Testis (tissue), 5 donors: ENCODE measurements at regions of chr10 and their contacts with region 1.

Region 1: GRCh38 chr10:80500572-80501380 is 36.9 kb upstream of the SH2D4B start:
- DNase-seq: peak; percentile 85
- H3K4me3 ChIP-seq: no peak overlapping the region
- H3K27ac ChIP-seq: peak overlapping the region; percentile 57 to 76
- H3K4me1 ChIP-seq: peaks cover 76% of the 10 kb centered on the region
- H3K27me3 ChIP-seq: no peaks in the 10 kb centered on the region
- CTCF ChIP-seq: peak in 1 of 3 experiments; percentile 32
- POLR2A ChIP-seq: no peak

Region 2: GRCh38 chr10:80453701-80454513 is 46.9 kb before region 1 on chr10 and contains the start of gene TSPAN14:
- intact Hi-C with region 1: loop called (anchors 5 kb)
- DNase-seq: peak; percentile 86
- H3K4me3 ChIP-seq: peak within 1 kb of the TSS; percentile 82 to 92
- H3K27ac ChIP-seq: peak within 1 kb of the TSS; percentile 97 to 98
- H3K4me1 ChIP-seq: peaks cover 35% of the 10 kb centered on the region
- H3K27me3 ChIP-seq: no peaks in the 10 kb centered on the region
- CTCF ChIP-seq: no peak
- POLR2A ChIP-seq: peak; percentile 6
- total RNA-seq, gene TSPAN14: 61.4 to 64.6 TPM

Region 3: DNA sequence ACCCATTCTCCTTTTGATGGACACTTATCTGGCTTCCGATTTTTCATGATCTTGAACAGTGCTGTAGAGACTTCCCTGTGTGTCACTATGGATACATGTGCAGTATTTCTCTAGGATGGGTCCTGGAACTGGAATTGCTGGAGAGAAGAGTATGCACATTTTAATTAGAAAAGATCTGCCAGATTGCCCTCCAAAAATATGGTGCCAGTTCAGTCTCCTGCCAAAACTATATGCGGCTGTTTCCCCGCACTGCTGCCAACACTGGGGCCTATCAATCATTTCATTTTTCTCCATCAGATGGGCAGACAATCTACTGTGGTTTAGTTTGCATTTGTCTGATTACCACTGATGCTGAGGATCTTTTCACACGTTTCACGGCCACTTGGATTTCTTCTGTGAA is 141.9 kb after region 1 on chr10:
- intact Hi-C with region 1: no loop called
- DNase-seq: no peak
- H3K4me3 ChIP-seq: no peak overlapping the region
- H3K27ac ChIP-seq: no peak overlapping the region
- H3K4me1 ChIP-seq: no peaks in the 10 kb centered on the region
- H3K27me3 ChIP-seq: no peaks in the 10 kb centered on the region
- CTCF ChIP-seq: no peak
- POLR2A ChIP-seq: no peak